ENCODE measurements at regions of chr6 and their contacts with region 1.

Region 1: GRCh38 chr6:119463081-119463626 is 113.6 kb upstream of the MAN1A1 start:
- DNase-seq: peak; percentile 28
- CTCF ChIP-seq: no peak

Region 2: GRCh38 chr6:119172824-119173223 is 290.3 kb before region 1 on chr6:
- CTCF ChIA-PET with region 1: no interaction called
- POLR2A ChIA-PET with region 1: no interaction called
- DNase-seq: no peak
- CTCF ChIP-seq: no peak

Region 3: DNA sequence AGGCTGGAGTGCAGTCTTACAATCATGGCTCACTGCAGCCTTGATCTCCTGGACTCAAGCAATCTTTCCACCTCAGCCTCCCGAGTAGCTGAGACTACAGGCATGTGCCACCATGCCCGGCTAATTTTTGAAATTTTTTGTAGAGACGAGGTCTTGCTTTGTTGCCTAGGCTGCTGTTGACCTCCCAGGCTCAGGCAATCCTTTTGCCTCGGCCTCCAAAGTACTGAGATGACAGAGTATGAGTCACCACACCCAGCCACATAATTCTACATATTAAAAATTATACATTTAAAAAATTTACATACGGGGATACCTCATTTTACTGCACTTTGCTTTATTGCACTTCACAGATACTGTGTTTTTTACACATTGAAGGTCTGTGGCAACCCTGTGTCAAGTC is 228.7 kb before region 1 on chr6:
- CTCF ChIA-PET with region 1: no interaction called
- POLR2A ChIA-PET with region 1: no interaction called
- DNase-seq: no peak
- CTCF ChIP-seq: no peak

Region 4: DNA sequence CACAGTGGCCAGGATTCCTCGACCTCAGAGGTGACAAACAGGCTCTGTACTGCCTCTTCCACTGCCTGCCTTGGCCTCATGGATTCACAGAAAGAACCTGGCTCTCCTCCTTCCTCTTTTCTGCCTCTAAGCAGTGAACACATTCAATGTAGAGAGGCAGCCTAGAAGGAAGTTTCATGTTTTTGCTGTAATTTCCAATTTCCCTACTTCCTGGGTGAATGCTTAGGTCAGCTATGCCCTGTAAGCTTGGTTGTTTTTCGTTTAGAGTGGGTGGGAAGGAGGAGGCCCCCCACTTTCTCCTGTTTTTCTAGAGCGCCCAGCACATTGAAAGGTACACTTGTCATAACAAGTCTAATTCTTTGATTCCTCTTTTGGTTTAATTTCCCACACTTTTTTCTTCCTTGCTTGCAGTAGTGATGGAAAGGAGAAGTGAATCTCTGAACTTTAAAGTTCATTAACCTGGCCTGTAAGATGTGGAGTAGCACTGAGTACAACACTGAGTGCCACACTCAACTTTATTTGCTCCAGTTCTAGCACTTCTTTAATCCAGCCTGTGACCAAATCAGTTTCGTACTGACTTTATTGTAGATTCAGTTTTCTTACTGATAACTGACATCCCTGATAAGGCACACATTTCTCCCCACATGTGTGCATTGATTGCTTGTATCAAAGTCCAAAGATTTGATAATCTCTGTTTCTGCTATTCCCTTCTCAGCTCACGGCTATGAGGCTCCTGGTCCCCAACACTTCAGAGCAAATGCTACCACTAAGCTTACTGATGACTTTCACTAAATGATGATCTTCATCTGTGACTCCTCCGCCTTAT is 13.6 kb before region 1 on chr6:
- CTCF ChIA-PET with region 1: interaction called, 14 read pairs
- POLR2A ChIA-PET with region 1: no interaction called
- DNase-seq: no peak
- CTCF ChIP-seq: no peak

Region 5: DNA sequence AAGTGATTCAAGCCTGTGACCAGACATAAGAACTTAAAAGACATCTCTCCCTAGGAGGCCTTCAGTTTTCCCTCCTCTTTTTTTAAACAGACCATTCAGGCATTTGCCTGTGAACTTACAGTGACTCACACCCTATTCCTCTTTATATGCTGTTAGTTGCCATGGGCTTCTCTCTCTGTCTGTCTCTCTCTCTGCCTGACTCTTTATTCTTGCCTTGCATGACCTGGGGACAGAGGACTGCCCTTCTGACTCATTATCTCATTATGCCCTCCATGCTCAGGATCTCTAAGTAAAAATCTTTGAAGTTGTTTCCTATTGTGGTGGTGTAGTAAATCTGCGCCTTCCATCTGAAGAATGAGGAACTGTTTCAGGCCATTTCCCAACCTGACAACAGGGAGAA is 328.6 kb after region 1 on chr6:
- CTCF ChIA-PET with region 1: no interaction called
- POLR2A ChIA-PET with region 1: no interaction called
- DNase-seq: no peak
- CTCF ChIP-seq: no peak

Measured in GM10248 (cell line).